ENCODE measurements at regions of chr17 and their contacts with region 1.

Region 1: DNA sequence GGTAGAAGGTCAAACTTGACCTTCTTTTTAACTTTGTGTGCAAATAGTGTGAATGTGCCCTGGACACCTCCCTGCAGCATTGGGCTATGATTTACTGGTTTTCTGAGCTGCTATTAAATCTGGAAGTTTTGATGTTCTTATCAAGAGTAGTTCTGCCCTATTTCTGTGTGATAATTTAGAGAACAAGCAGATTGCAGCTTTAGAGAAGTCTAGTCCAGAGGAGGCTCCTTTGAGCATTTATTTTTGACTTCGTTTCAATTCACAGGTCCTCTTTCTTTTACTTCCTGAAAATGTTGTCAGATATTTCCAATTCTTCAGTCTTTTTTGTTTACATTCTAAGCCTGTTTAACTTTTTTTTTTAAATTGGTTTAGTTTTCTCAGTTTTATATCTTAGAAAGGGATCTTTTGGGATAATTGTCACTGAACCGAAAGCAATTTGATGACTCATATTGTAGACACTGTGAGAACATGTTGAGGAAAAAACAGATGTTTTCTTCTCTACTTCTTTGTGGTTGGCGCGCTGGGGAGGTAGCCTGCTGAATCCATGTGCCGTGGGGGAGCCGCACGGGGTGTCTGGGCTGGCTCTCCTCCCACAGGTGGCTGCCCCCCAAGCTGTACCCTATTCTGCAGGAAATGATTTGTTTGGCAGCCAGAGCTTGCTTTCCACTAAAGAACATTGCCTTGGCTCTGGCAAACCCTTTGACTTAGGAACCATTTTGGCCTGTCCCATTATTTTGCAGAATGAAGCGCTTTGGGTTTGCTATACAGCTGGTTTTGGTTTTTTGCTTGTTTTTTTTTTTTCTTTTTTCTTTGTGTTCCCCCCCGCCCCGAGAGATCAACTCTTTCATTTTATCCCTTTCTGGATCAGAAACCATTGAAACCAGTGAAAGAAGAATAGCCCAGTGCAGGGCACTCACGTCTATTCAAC is 53.4 kb downstream of the MFSD11 start:
- DNase-seq: peak; percentile 77
- H3K4me3 ChIP-seq: peak overlapping the region; percentile 17
- H3K27ac ChIP-seq: peak overlapping the region; percentile 72
- H3K4me1 ChIP-seq: peaks cover 16% of the 10 kb centered on the region
- H3K27me3 ChIP-seq: no peaks in the 10 kb centered on the region
- CTCF ChIP-seq: no peak

Region 2: DNA sequence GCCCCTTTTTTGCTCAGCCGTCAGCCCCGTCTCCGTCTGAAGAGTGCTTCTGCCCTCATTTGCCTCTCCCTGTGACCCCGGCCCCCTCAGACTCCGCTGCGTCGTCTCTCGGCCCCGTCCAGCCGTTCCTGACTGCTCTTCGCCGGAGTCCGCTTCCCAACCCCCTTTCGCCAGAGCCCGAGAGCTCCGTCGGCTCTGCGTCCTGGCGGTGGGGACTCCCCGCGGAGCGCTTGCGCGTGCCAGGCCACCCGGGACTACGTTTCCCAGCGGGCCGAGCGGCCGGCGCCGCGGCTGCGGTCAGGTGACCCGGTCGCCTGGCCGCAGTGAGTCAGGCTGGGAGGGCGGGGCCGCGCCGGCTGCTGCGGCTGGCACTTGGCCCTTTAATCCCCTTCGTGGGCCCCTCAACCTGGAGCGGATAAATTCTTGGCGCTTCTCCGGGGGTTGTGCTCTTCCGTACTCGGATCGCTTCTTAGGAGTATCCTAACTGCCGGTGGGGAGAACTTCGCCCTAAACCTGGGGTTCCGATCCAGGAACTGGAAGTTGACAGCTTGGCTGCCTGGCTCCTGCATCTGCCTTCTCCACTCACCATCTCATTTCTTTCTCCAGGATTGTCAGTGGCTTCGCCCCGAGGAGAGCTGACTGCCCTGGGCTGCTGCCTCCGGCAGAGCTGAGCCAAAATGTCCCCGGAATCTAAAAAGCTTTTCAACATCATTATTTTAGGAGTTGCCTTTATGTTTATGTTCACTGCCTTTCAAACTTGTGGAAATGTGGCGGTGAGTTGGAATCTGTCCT is 53.4 kb before region 1 on chr17 and contains the start of gene MFSD11:
- CTCF ChIA-PET with region 1: no interaction called
- POLR2A ChIA-PET with region 1: no interaction called
- intact Hi-C with region 1: loop called (anchors 2 kb)
- DNase-seq: peak; percentile 94
- H3K4me3 ChIP-seq: peak within 1 kb of the TSS; percentile 77
- H3K27ac ChIP-seq: peak within 1 kb of the TSS; percentile 100
- H3K4me1 ChIP-seq: peaks cover 20% of the 10 kb centered on the region
- H3K27me3 ChIP-seq: no peaks in the 10 kb centered on the region
- CTCF ChIP-seq: no peak
- total RNA-seq, gene MFSD11: 37.4 and 38.8 TPM in 2 replicates

Region 3: DNA sequence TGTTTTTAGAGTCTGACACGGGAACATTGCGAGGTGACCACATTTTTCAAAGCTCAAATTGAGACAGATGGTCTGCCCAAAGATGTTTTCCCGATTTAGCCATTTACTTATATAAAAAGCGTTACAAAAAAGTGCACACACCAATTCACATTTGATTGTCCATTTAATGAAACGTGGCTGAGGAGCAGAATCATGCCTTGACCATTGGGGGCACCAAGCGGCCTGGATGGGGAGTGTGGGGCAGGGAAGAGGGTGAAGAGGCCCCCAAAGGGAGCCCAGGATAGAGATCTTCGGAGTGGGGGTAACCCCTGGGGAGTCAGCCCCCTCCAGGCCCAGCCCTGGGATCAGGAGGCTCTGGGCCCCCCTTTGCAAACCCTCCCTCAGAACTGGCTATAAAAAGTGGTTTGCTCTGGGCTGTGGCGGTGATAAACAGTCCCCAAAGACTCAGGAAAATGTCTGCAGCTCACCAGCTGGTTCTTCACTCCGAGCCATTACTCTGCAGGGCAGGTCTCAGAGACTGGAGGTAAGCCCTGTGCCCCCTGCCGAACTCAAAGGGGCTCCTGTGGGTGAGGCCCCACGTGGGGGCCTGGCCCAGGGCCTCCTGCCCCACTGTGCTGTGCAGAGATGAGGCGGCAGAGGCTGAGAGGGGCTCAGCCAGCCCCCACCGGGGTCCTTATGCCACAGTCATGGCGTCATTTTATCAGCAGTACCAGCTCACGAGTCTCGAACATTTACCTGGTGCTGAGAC is 243.5 kb after region 1 on chr17:
- CTCF ChIA-PET with region 1: no interaction called
- POLR2A ChIA-PET with region 1: interaction called, 20 read pairs
- intact Hi-C with region 1: no loop called
- DNase-seq: no peak
- H3K4me3 ChIP-seq: no peak overlapping the region
- H3K27ac ChIP-seq: no peak overlapping the region
- H3K4me1 ChIP-seq: no peaks in the 10 kb centered on the region
- H3K27me3 ChIP-seq: peaks cover 2% of the 10 kb centered on the region
- CTCF ChIP-seq: no peak